Activated naive CD4-positive, alpha-beta T cell treated with anti-CD3 and anti-CD28 coated beads for 36 hours (primary cell): ENCODE measurements at regions of chr20 and their contacts with region 1.

Region 1: GRCh38 chr20:33731693-33732165 is at the start of gene ZNF341:
- DNase-seq: peak; percentile 89
- H3K4me3 Mint-ChIP-seq: peak within 1 kb of the TSS; percentile 79
- H3K27ac Mint-ChIP-seq: peak within 1 kb of the TSS; percentile 90
- H3K4me1 Mint-ChIP-seq: peaks cover 18% of the 10 kb centered on the region
- H3K27me3 Mint-ChIP-seq: no peaks in the 10 kb centered on the region
- total RNA-seq, gene ZNF341: 5.8 to 6.8 TPM

Region 2: GRCh38 chr20:33443512-33444239 is 288.1 kb before region 1 on chr20 and contains the start of gene SNTA1:
- CTCF ChIA-PET with region 1: interaction called, 3 read pairs
- intact Hi-C with region 1: loop called (anchors 5 kb)
- DNase-seq: peak; percentile 88
- H3K4me3 Mint-ChIP-seq: peak within 1 kb of the TSS; percentile 84
- H3K27ac Mint-ChIP-seq: peak within 1 kb of the TSS; percentile 46
- H3K4me1 Mint-ChIP-seq: peaks cover 10% of the 10 kb centered on the region
- H3K27me3 Mint-ChIP-seq: no peaks in the 10 kb centered on the region
- total RNA-seq, gene SNTA1: 2.6 to 2.9 TPM

Region 3: GRCh38 chr20:33460711-33461110 is 271.0 kb before region 1 on chr20:
- CTCF ChIA-PET with region 1: no interaction called
- intact Hi-C with region 1: loop called (anchors 1 kb)
- DNase-seq: peak; percentile 9
- H3K4me3 Mint-ChIP-seq: no peak overlapping the region
- H3K27ac Mint-ChIP-seq: no peak overlapping the region
- H3K4me1 Mint-ChIP-seq: no peaks in the 10 kb centered on the region
- H3K27me3 Mint-ChIP-seq: no peaks in the 10 kb centered on the region

Region 4: DNA sequence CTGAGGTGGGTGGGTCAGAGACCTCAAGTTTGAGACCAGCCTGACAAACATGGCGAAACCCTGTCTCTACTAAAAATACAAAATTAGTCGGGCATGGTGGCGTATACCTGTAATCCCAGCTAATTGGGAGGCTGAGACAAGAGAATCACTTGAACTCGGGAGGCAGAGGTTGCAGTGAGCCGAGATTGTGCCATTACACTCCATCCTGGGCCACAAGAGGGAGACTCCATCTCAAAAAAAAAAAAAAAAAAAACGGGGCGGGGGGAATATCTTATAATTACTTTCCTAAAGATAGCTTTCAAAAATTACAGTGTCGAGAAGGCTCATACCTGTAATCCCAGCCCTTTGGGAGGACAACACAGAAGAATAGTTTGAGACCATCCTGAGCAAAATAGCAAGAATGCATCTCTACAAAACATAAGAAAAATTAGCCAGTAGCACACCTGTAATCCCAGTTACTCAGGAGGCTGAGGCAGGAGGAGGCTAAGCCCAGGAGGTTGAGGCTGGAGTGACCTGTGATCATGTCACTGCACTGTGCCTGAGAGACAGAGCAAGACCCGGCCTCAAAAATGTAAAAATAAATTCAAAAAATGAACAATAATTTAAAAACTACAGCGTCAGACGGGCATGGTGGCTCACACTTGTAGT is 216.0 kb before region 1 on chr20:
- CTCF ChIA-PET with region 1: no interaction called
- intact Hi-C with region 1: loop called (anchors 1 kb)
- DNase-seq: peak; percentile 11
- H3K4me3 Mint-ChIP-seq: no peak overlapping the region
- H3K27ac Mint-ChIP-seq: no peak overlapping the region
- H3K4me1 Mint-ChIP-seq: peaks cover 15% of the 10 kb centered on the region
- H3K27me3 Mint-ChIP-seq: no peaks in the 10 kb centered on the region

Region 5: DNA sequence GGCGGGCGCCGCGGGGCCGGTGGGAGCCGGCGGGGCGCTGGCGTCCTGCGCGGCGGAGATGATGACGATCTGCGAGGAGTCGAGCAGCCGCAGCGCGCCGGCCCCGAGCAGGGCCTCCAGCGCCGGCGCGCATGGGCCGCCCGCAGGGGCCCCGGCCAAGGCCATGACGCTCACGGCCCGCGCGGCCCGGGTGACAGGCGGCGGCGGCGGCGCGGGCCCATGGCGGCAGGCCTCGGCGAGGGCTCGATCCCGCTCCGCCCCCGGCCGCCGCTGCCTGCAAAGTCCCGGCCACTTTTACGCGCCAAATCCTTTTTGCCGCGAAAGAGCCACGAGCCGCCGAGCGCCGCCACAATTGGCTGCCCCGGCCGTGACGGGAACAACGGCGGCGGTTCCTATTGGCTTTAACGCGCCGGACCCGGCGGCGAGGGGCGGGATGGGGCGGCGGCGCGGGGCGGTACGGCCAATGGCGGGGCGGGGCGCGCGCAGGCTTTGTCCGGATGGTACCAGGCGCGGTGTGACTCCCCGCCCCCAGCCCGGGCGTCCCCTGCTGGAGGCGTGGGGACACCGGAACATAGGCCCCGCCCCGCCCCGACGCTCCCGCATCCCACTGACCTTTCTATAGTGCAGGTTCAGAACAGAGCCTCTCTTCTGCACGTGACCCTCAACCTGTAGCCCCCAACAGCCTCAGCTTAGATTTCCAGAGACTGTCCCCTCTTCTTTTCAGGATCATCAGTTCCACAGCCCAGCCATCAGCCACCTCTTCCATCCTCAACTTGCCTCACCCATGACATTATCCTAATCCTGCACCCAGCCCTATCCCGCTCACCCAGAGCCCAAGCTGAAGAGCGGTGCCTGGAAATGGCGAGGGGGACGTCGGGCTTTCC is 45.4 kb before region 1 on chr20 and contains the start of gene E2F1:
- CTCF ChIA-PET with region 1: interaction called, 8 read pairs
- intact Hi-C with region 1: loop called (anchors 1 kb)
- DNase-seq: peak; percentile 97
- H3K4me3 Mint-ChIP-seq: peak within 1 kb of the TSS; percentile 87
- H3K27ac Mint-ChIP-seq: peak within 1 kb of the TSS; percentile 88
- H3K4me1 Mint-ChIP-seq: peaks cover 62% of the 10 kb centered on the region
- H3K27me3 Mint-ChIP-seq: no peaks in the 10 kb centered on the region
- total RNA-seq, gene E2F1: 69.3 to 70.0 TPM

Region 6: DNA sequence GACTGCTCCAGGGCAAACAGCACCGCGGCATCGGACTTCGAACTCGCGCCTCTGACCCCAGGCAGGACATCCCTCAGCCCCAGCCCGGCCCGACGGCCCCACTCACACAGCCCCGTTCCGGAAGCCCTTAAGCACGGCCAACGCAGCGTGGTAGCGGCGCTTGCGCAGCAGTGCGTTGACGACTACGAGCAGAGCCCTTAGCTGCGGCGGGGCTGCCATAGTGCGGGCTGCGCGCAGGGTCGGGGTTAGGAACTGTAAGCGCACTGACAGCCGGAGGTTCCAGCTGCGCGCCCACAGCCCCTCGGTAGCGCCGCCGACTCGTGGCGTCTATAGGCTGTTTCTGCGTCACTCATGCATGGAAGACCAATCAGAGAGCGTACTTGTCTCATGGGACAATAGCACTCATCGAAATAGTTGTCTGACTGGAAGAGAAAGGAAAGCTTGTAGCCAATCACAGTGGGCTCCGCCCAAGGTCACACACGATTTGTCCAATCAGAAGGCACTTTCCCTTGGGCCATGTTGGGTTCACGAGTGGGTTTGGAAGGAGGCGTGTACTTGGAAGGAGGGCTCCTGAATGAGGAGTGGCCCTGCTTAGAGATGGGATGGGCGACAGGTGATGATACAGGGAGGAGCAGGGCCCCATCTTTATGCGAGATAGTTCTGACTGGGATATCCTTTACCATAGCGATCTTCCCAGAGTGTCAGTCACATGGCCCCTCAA is 11.6 kb before region 1 on chr20 and contains the start of gene PXMP4:
- CTCF ChIA-PET with region 1: interaction called, 4 read pairs
- intact Hi-C with region 1: loop called (anchors 1 kb)
- DNase-seq: peak; percentile 95
- H3K4me3 Mint-ChIP-seq: peak within 1 kb of the TSS; percentile 79
- H3K27ac Mint-ChIP-seq: peak within 1 kb of the TSS; percentile 76
- H3K4me1 Mint-ChIP-seq: peaks cover 21% of the 10 kb centered on the region
- H3K27me3 Mint-ChIP-seq: no peaks in the 10 kb centered on the region
- total RNA-seq, gene PXMP4: 9.5 to 10.3 TPM

Region 7: GRCh38 chr20:33777816-33778215 is 46.1 kb after region 1 on chr20:
- CTCF ChIA-PET with region 1: no interaction called
- intact Hi-C with region 1: loop called (anchors 1 kb)
- DNase-seq: no peak
- H3K4me3 Mint-ChIP-seq: no peak overlapping the region
- H3K27ac Mint-ChIP-seq: no peak overlapping the region
- H3K4me1 Mint-ChIP-seq: peaks cover 15% of the 10 kb centered on the region
- H3K27me3 Mint-ChIP-seq: no peaks in the 10 kb centered on the region

Region 8: GRCh38 chr20:34010405-34010931 is 278.7 kb after region 1 on chr20:
- CTCF ChIA-PET with region 1: no interaction called
- intact Hi-C with region 1: no loop called
- DNase-seq: no peak
- H3K4me3 Mint-ChIP-seq: no peak overlapping the region
- H3K27ac Mint-ChIP-seq: no peak overlapping the region
- H3K4me1 Mint-ChIP-seq: peaks cover 85% of the 10 kb centered on the region
- H3K27me3 Mint-ChIP-seq: no peaks in the 10 kb centered on the region